HepG2 (cell line): ENCODE measurements at regions of chr2 and their contacts with region 1.

Region 1: GRCh38 chr2:102141970-102142828 is at the start of gene IL1R1:
- DNase-seq: peak; percentile 60
- ATAC-seq: peak; percentile 90
- H3K4me3 ChIP-seq: peak within 1 kb of the TSS; percentile 64 to 99 (median 86)
- H3K27ac ChIP-seq: peak within 1 kb of the TSS; percentile 74
- H3K4me1 ChIP-seq: peaks cover 63% of the 10 kb centered on the region
- H3K27me3 ChIP-seq: no peaks in the 10 kb centered on the region; a peak in 1 of 5 replicates
- CTCF ChIP-seq: peak; percentile 28; the same call in 1 of the 2 replicates
- EP300 ChIP-seq: peak; percentile 4 to 33; a peak in 1 of 4 replicates
- POLR2A ChIP-seq: peak; percentile 70 to 78
- RAD21 ChIP-seq: peak; percentile 67
- total RNA-seq, gene IL1R1: 38.0 and 48.3 TPM in 2 replicates

Region 2: GRCh38 chr2:101998896-101999789 is 143.1 kb before region 1 on chr2:
- CTCF ChIA-PET with region 1: no interaction called
- POLR2A ChIA-PET with region 1: interaction called, 13 read pairs
- in situ Hi-C with region 1: no loop called
- intact Hi-C with region 1: no loop called
- DNase-seq: peak; percentile 89
- ATAC-seq: peak; percentile 95
- H3K4me3 ChIP-seq: peak overlapping the region; percentile 6 to 60 (median 54)
- H3K27ac ChIP-seq: peak overlapping the region; percentile 86
- H3K4me1 ChIP-seq: peaks cover 38% of the 10 kb centered on the region
- H3K27me3 ChIP-seq: peaks cover 2 to 17% of the 10 kb centered on the region in 2 experiments
- CTCF ChIP-seq: peak; percentile 63
- EP300 ChIP-seq: peak in 1 of 2 experiments; percentile 57; a peak in 2 of 4 replicates
- POLR2A ChIP-seq: peak; percentile 75 to 81
- RAD21 ChIP-seq: peak; percentile 15; the same call in 1 of the 2 replicates

Region 3: DNA sequence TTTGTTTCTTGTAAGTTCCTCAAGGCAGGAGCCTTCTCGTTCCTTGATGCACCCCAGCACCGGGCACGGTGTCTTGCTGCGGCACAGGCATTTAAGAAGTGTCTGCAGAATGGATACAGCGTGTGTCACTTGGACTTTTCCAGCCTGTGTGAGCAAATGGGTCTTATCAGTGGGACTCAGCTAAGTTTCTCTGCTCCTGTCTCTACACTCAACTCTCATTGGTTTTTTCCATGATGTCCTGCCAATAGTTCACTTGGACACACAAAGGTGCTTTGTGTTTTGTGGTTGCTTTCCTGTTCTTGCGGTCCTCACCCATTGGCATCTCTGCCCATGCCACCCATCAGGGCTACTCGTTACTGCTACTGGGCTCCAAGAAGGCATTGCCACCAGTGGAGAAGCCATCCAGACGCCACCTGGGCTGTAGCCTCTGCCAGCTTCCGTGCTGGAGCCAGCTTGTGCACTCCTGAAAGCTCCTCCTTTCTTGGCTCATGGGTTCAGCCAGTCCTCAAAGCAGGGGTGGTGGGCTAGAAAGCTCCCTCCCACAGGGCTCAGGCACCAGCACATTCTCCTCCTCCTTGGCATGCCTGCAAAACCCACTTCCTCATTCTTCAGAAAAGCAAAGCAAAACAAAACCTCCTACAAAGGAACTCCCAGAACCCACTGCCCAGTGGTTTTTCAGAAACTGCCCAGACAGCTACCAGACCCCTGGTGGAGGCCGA is 109.0 kb before region 1 on chr2:
- CTCF ChIA-PET with region 1: no interaction called
- POLR2A ChIA-PET with region 1: interaction called, 22 read pairs
- in situ Hi-C with region 1: no loop called
- intact Hi-C with region 1: no loop called
- DNase-seq: peak; percentile 80
- ATAC-seq: peak; percentile 53
- H3K4me3 ChIP-seq: peak overlapping the region; percentile 8 to 59 (median 14); a peak in 5 of 6 replicates
- H3K27ac ChIP-seq: peak overlapping the region; percentile 73
- H3K4me1 ChIP-seq: peaks cover 83% of the 10 kb centered on the region
- H3K27me3 ChIP-seq: no peaks in the 10 kb centered on the region
- CTCF ChIP-seq: peak; percentile 11; the same call in 1 of the 2 replicates
- EP300 ChIP-seq: peak in 1 of 2 experiments; percentile 50; a peak in 2 of 4 replicates
- POLR2A ChIP-seq: peak; percentile 30 to 62; a peak in 3 of 4 replicates
- RAD21 ChIP-seq: no peak

Region 4: GRCh38 chr2:102103992-102104871 is 38.0 kb before region 1 on chr2:
- CTCF ChIA-PET with region 1: no interaction called
- POLR2A ChIA-PET with region 1: interaction called, 67 read pairs
- in situ Hi-C with region 1: no loop called
- intact Hi-C with region 1: loop called (anchors 5 kb)
- DNase-seq: no peak
- ATAC-seq: no peak
- H3K4me3 ChIP-seq: no peak overlapping the region
- H3K27ac ChIP-seq: peak overlapping the region; percentile 26
- H3K4me1 ChIP-seq: peaks cover 98% of the 10 kb centered on the region
- H3K27me3 ChIP-seq: no peaks in the 10 kb centered on the region
- CTCF ChIP-seq: no peak
- EP300 ChIP-seq: no peak
- POLR2A ChIP-seq: no peak
- RAD21 ChIP-seq: no peak

Region 5: DNA sequence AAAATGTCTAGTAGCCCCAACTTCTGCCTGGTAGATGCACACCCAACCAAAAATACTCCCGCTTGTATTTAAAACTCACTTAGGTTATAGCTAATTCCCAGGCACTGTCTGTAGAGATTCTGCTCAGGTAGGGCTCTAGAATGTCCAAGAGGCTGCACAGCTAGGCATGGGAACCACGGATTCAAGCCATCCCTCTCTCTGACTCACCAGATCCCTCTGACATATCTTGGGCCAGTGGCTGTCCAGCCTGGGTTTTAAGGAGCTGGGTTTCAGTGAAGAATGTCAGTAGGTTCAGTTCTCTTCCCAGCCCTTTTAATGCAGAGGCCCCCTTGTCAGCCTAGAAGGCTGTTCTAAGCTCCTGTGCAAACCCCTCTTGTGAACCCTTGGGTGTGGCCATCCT is 15.5 kb before region 1 on chr2:
- CTCF ChIA-PET with region 1: no interaction called
- POLR2A ChIA-PET with region 1: interaction called, 11 read pairs
- in situ Hi-C with region 1: no loop called
- intact Hi-C with region 1: no loop called
- DNase-seq: no peak
- ATAC-seq: no peak
- H3K4me3 ChIP-seq: no peak overlapping the region
- H3K27ac ChIP-seq: no peak overlapping the region
- H3K4me1 ChIP-seq: peaks cover 4% of the 10 kb centered on the region; the same call in 1 of the 2 replicates
- H3K27me3 ChIP-seq: no peaks in the 10 kb centered on the region
- CTCF ChIP-seq: no peak
- EP300 ChIP-seq: no peak
- POLR2A ChIP-seq: no peak
- RAD21 ChIP-seq: no peak

Region 6: GRCh38 chr2:102240640-102241370 is 98.6 kb after region 1 on chr2:
- CTCF ChIA-PET with region 1: no interaction called
- POLR2A ChIA-PET with region 1: interaction called, 5 read pairs
- in situ Hi-C with region 1: no loop called
- intact Hi-C with region 1: loop called (anchors 1 kb)
- DNase-seq: peak; percentile 88
- ATAC-seq: peak; percentile 97
- H3K4me3 ChIP-seq: peak overlapping the region in 2 of 3 experiments; percentile 12 to 55; a peak in 3 of 6 replicates
- H3K27ac ChIP-seq: no peak overlapping the region
- H3K4me1 ChIP-seq: peaks cover 49% of the 10 kb centered on the region
- H3K27me3 ChIP-seq: peaks cover 0 to 38% of the 10 kb centered on the region in 2 experiments; a peak in 3 of 5 replicates
- CTCF ChIP-seq: peak; percentile 100
- EP300 ChIP-seq: peak in 1 of 2 experiments; percentile 86; a peak in 2 of 4 replicates
- POLR2A ChIP-seq: no peak
- RAD21 ChIP-seq: peak; percentile 97